CD8-positive, alpha-beta T cell (primary cell): ENCODE measurements at regions of chr22 and their contacts with region 1.

Region 1: GRCh38 chr22:17171313-17172171 is 12.5 kb upstream of the HDHD5 start:
- DNase-seq: peak; percentile 43 to 88 (median 74)
- ATAC-seq: peak; percentile 89
- H3K4me3 ChIP-seq: peak overlapping the region; percentile 64 to 88
- H3K4me3 Mint-ChIP-seq: peak overlapping the region; percentile 81
- H3K27ac ChIP-seq: peak overlapping the region; percentile 40 to 65
- H3K27ac Mint-ChIP-seq: peak overlapping the region; percentile 67
- H3K4me1 ChIP-seq: peaks cover 5% of the 10 kb centered on the region
- H3K4me1 Mint-ChIP-seq: peaks cover 8% of the 10 kb centered on the region
- H3K27me3 ChIP-seq: no peaks in the 10 kb centered on the region
- H3K27me3 Mint-ChIP-seq: no peaks in the 10 kb centered on the region
- CTCF ChIP-seq: peak; percentile 81

Region 2: DNA sequence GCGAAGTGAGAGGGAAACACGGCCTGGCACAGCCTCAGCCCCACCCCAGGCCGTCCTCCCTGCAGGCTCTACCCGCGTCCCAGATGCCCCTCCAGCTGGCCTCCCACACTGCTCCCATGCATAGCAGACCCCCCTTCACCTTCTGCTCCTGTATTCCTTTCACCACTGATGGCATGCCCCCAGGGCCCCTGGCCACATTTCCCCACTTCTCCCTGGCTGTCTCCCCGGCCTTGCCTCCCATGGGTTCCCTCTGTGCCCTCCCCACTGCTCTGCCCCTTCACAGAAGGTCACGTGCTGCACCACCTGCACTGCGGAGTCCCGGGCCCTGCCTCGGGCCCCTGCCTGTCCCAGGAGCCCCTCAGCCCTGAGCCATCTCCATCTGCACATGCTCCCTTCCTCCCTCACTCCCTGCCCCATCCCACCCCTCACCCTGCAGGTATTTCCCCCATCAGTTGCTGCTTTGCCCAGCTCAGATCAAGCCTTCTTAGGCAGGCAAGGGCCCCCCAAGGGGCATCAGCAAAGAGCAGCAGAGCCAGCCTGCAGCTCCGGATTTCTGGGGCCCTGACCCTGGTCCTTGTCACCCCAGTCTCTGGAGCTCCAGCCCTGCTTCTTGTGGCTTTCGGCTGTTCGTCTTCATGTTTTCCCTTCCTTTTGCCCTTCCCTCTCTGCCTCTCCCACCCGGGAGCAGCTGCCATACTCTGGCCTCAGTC is 209.9 kb before region 1 on chr22:
- CTCF ChIA-PET with region 1: no interaction called
- POLR2A ChIA-PET with region 1: no interaction called
- intact Hi-C with region 1: no loop called
- DNase-seq: peak in 1 of 9 experiments; percentile 38
- ATAC-seq: no peak
- H3K4me3 ChIP-seq: no peak overlapping the region
- H3K4me3 Mint-ChIP-seq: no peak overlapping the region
- H3K27ac ChIP-seq: no peak overlapping the region
- H3K27ac Mint-ChIP-seq: no peak overlapping the region
- H3K4me1 ChIP-seq: no peaks in the 10 kb centered on the region
- H3K4me1 Mint-ChIP-seq: no peaks in the 10 kb centered on the region
- H3K27me3 ChIP-seq: no peaks in the 10 kb centered on the region
- H3K27me3 Mint-ChIP-seq: no peaks in the 10 kb centered on the region
- CTCF ChIP-seq: no peak

Region 3: GRCh38 chr22:17057959-17058814 is 113.4 kb before region 1 on chr22:
- CTCF ChIA-PET with region 1: interaction called, 15 read pairs
- POLR2A ChIA-PET with region 1: no interaction called
- intact Hi-C with region 1: no loop called
- DNase-seq: peak in 7 of 9 experiments; percentile 25 to 65 (median 52)
- ATAC-seq: peak; percentile 62
- H3K4me3 ChIP-seq: no peak overlapping the region
- H3K4me3 Mint-ChIP-seq: no peak overlapping the region
- H3K27ac ChIP-seq: no peak overlapping the region
- H3K27ac Mint-ChIP-seq: no peak overlapping the region
- H3K4me1 ChIP-seq: peaks cover 3% of the 10 kb centered on the region
- H3K4me1 Mint-ChIP-seq: peaks cover 4% of the 10 kb centered on the region
- H3K27me3 ChIP-seq: no peaks in the 10 kb centered on the region
- H3K27me3 Mint-ChIP-seq: peaks cover 7% of the 10 kb centered on the region
- CTCF ChIP-seq: peak; percentile 96

Region 4: DNA sequence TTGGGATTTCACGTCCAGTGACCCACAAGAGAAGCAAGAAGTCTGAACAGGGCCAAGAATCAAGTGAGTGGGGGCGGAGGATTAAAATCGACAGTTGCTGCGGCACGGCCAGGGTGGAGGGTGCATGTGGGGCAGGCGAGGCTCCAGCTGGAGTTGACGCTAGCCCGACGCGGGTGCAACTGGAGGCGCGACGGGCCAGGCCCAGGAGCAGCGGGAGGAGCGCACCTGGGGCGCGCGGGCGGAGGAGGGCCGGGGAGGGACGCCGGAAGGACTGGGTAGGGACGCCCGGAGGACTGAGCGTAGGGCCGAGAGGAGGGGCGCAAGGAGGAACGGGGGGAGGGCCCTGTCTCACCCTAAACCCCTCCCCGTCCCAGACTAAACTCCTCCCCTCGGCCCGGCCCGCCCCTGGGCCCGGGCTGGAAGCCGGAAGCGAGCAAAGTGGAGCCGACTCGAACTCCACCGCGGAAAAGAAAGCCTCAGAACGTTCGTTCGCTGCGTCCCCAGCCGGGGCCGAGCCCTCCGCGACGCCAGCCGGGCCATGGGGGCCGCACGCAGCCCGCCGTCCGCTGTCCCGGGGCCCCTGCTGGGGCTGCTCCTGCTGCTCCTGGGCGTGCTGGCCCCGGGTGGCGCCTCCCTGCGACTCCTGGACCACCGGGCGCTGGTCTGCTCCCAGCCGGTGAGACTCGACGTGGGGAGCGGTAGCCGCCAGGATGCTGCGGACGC is 86.8 kb before region 1 on chr22 and contains the start of gene IL17RA:
- CTCF ChIA-PET with region 1: interaction called, 114 read pairs
- POLR2A ChIA-PET with region 1: interaction called, 10 read pairs
- intact Hi-C with region 1: loop called in 1 of 2 experiments (anchors 1 kb)
- DNase-seq: peak; percentile 90 to 98 (median 94)
- ATAC-seq: peak; percentile 90
- H3K4me3 ChIP-seq: peak within 1 kb of the TSS; percentile 48 to 80
- H3K4me3 Mint-ChIP-seq: peak within 1 kb of the TSS; percentile 96
- H3K27ac ChIP-seq: peak within 1 kb of the TSS; percentile 65 to 79
- H3K27ac Mint-ChIP-seq: peak within 1 kb of the TSS; percentile 91
- H3K4me1 ChIP-seq: peaks cover 34% of the 10 kb centered on the region
- H3K4me1 Mint-ChIP-seq: peaks cover 41% of the 10 kb centered on the region
- H3K27me3 ChIP-seq: no peaks in the 10 kb centered on the region
- H3K27me3 Mint-ChIP-seq: no peaks in the 10 kb centered on the region
- CTCF ChIP-seq: no peak
- total RNA-seq, gene IL17RA: 20.4 to 24.7 TPM

Region 5: GRCh38 chr22:17121227-17122195 is 50.0 kb before region 1 on chr22 and contains the start of gene TMEM121B:
- CTCF ChIA-PET with region 1: interaction called, 16 read pairs
- POLR2A ChIA-PET with region 1: no interaction called
- intact Hi-C with region 1: no loop called
- DNase-seq: peak in 2 of 9 experiments; percentile 14 to 29
- ATAC-seq: no peak
- H3K4me3 ChIP-seq: no peak within 1 kb of the TSS
- H3K4me3 Mint-ChIP-seq: peak within 1 kb of the TSS; percentile 69
- H3K27ac ChIP-seq: no peak within 1 kb of the TSS
- H3K27ac Mint-ChIP-seq: no peak within 1 kb of the TSS
- H3K4me1 ChIP-seq: peaks cover 44% of the 10 kb centered on the region
- H3K4me1 Mint-ChIP-seq: peaks cover 29% of the 10 kb centered on the region
- H3K27me3 ChIP-seq: peaks cover 11% of the 10 kb centered on the region in 2 experiments
- H3K27me3 Mint-ChIP-seq: peaks cover 10% of the 10 kb centered on the region
- CTCF ChIP-seq: no peak
- total RNA-seq, gene TMEM121B: 0.11 TPM in 1 of 2 experiments, not detected in the other

Region 6: GRCh38 chr22:17149076-17149810 is 22.3 kb before region 1 on chr22:
- CTCF ChIA-PET with region 1: interaction called, 17 read pairs
- POLR2A ChIA-PET with region 1: no interaction called
- intact Hi-C with region 1: no loop called
- DNase-seq: no peak
- ATAC-seq: no peak
- H3K4me3 ChIP-seq: no peak overlapping the region
- H3K4me3 Mint-ChIP-seq: no peak overlapping the region
- H3K27ac ChIP-seq: no peak overlapping the region
- H3K27ac Mint-ChIP-seq: no peak overlapping the region
- H3K4me1 ChIP-seq: no peaks in the 10 kb centered on the region
- H3K4me1 Mint-ChIP-seq: peaks cover 25% of the 10 kb centered on the region
- H3K27me3 ChIP-seq: no peaks in the 10 kb centered on the region
- H3K27me3 Mint-ChIP-seq: no peaks in the 10 kb centered on the region
- CTCF ChIP-seq: no peak

Region 7: GRCh38 chr22:17191163-17191784 is 19.7 kb after region 1 on chr22:
- CTCF ChIA-PET with region 1: interaction called, 12 read pairs
- POLR2A ChIA-PET with region 1: interaction called, 3 read pairs
- intact Hi-C with region 1: no loop called
- DNase-seq: no peak
- ATAC-seq: no peak
- H3K4me3 ChIP-seq: no peak overlapping the region
- H3K4me3 Mint-ChIP-seq: no peak overlapping the region
- H3K27ac ChIP-seq: no peak overlapping the region
- H3K27ac Mint-ChIP-seq: no peak overlapping the region
- H3K4me1 ChIP-seq: no peaks in the 10 kb centered on the region
- H3K4me1 Mint-ChIP-seq: peaks cover 5% of the 10 kb centered on the region
- H3K27me3 ChIP-seq: no peaks in the 10 kb centered on the region
- H3K27me3 Mint-ChIP-seq: no peaks in the 10 kb centered on the region
- CTCF ChIP-seq: no peak

Region 8: DNA sequence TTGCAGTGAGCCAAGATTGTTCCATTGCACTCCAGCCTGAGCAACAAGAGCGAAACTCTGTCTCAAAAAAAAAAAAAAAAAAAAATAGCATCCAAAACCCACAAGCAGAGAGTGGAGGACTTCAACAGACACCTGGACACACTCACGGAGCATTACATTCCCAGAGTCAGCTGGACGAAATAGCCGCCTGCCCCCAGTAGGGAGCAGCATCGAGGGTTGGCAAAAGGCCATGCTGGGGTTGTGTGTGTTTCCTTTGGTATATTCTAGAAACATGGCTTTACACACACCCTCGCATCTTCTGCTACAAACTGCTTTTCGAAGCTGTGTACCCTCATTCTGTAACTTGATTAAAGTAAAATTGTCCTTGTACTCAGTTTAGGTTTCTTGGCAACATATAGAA is 42.4 kb after region 1 on chr22:
- CTCF ChIA-PET with region 1: interaction called, 17 read pairs
- POLR2A ChIA-PET with region 1: interaction called, 3 read pairs
- intact Hi-C with region 1: loop called in 1 of 2 experiments (anchors 5 kb)
- DNase-seq: peak; percentile 25 to 72 (median 53)
- ATAC-seq: peak; percentile 45
- H3K4me3 ChIP-seq: no peak overlapping the region
- H3K4me3 Mint-ChIP-seq: peak overlapping the region; percentile 22
- H3K27ac ChIP-seq: peak overlapping the region in 1 of 2 experiments; percentile 34
- H3K27ac Mint-ChIP-seq: peak overlapping the region; percentile 89
- H3K4me1 ChIP-seq: peaks cover 33% of the 10 kb centered on the region
- H3K4me1 Mint-ChIP-seq: peaks cover 61% of the 10 kb centered on the region
- H3K27me3 ChIP-seq: no peaks in the 10 kb centered on the region
- H3K27me3 Mint-ChIP-seq: no peaks in the 10 kb centered on the region
- CTCF ChIP-seq: peak; percentile 30